ENCODE measurements at regions of chrX and their contacts with region 1.

Region 1: GRCh38 chrX:37755025-37755424 is 24.8 kb upstream of the CYBB start:
- DNase-seq: peak in 6 of 9 donors; percentile 15 to 53 (median 44)
- ATAC-seq: peak; percentile 91
- H3K4me3 ChIP-seq: peak overlapping the region; percentile 25
- H3K4me3 Mint-ChIP-seq: no peak overlapping the region
- H3K27ac ChIP-seq: peak overlapping the region; percentile 26
- H3K27ac Mint-ChIP-seq: no peak overlapping the region
- H3K4me1 ChIP-seq: peaks cover 37% of the 10 kb centered on the region in 2 donors
- H3K4me1 Mint-ChIP-seq: peaks cover 0 to 18% (median 6%) of the 10 kb centered on the region in 7 donors
- H3K27me3 ChIP-seq: no peaks in the 10 kb centered on the region
- H3K27me3 Mint-ChIP-seq: no peaks in the 10 kb centered on the region

Region 2: DNA sequence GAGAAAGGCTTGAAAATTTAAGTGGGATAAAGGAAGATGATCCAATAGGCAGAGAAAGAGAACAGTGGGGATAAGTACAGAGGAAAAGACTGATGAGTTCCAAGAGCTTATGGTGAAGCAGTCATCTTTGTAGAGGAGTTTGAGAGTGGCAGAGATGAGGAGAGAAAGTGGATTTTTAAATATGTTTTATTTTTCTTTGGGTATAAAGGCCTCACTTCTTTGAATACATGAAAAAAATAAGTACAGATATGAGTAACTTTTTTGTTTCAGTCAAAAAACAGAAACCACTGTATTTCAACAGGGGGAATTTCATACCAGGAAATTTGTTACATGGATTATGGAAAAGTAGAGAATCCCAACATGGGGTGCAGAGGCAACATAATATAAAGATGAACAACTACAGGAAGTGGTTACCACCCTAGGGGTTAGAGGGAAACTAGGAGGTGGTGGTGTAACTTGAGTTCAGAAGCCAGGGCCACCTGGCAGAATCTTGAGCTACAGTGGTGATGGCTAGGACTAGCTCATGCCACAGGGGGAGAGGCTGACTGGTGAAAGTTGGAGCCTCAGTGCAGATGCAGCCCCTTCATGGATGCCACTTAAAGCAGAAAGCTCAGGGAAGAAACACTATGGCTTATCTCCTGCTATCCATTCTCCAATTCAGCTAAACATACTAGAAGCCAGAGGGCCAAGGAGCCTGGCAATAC is 21.4 kb after region 1 on chrX:
- CTCF ChIA-PET with region 1: no interaction called
- POLR2A ChIA-PET with region 1: no interaction called
- intact Hi-C with region 1: loop called in 1 of 2 experiments (anchors 1 kb)
- DNase-seq: no peak
- ATAC-seq: peak; percentile 45
- H3K4me3 ChIP-seq: no peak overlapping the region
- H3K4me3 Mint-ChIP-seq: peak overlapping the region in 9 of 10 donors; percentile 26 to 67 (median 59)
- H3K27ac ChIP-seq: no peak overlapping the region
- H3K27ac Mint-ChIP-seq: peak overlapping the region; percentile 30 to 89 (median 70)
- H3K4me1 ChIP-seq: peaks cover 12 to 20% of the 10 kb centered on the region in 2 donors
- H3K4me1 Mint-ChIP-seq: peaks cover 7 to 26% (median 24%) of the 10 kb centered on the region in 7 donors
- H3K27me3 ChIP-seq: no peaks in the 10 kb centered on the region
- H3K27me3 Mint-ChIP-seq: no peaks in the 10 kb centered on the region

Region 3: DNA sequence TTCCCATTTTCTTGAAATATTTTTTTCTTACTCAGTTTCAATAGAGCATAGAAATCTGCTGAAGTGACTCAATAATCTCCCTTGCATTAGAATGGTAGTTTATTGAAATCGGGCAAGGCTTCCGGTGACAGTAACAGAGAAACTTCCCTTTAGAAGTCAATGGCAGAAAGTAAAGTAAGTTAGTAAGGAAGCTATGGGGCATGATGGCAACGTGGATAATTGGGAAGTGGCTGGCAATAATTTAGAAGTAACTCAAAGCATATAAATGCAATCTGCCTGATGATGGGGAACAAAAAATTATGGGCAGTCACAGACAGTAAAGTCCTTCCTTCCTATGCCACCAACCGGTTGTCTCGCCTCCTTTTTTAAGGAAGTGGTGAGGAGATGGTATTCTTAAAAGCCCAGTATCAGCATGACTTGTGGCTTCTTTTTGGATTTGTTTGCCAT is 32.4 kb after region 1 on chrX:
- CTCF ChIA-PET with region 1: no interaction called
- POLR2A ChIA-PET with region 1: no interaction called
- intact Hi-C with region 1: loop called (anchors 2 to 5 kb)
- DNase-seq: no peak
- ATAC-seq: peak; percentile 62
- H3K4me3 ChIP-seq: no peak overlapping the region
- H3K4me3 Mint-ChIP-seq: peak overlapping the region in 6 of 10 donors; percentile 1 to 61 (median 51)
- H3K27ac ChIP-seq: no peak overlapping the region
- H3K27ac Mint-ChIP-seq: peak overlapping the region in 7 of 9 donors; percentile 3 to 86 (median 48)
- H3K4me1 ChIP-seq: peaks cover 11 to 20% of the 10 kb centered on the region in 2 donors
- H3K4me1 Mint-ChIP-seq: peaks cover 18 to 52% (median 38%) of the 10 kb centered on the region in 7 donors
- H3K27me3 ChIP-seq: no peaks in the 10 kb centered on the region
- H3K27me3 Mint-ChIP-seq: no peaks in the 10 kb centered on the region

Region 4: DNA sequence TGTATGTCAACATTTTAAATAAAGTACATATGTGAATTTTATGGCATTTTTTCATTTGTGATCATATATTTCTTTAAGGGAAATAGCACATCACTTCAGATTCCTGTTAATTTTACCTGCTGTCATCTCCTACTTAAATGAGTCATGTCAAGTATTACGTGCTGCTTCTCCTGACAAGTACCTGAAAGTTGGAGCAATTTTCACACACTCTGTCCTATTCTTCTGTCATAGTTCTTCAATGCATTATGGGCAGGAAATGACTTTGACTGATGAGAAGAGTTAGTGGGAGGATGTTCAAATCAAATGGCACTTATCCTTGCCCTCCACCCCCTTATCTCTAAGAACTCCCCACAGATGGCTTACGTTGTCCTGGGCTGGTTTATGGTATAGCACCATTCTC is 187.1 kb after region 1 on chrX:
- CTCF ChIA-PET with region 1: no interaction called
- POLR2A ChIA-PET with region 1: no interaction called
- intact Hi-C with region 1: no loop called
- DNase-seq: no peak
- ATAC-seq: no peak
- H3K4me3 ChIP-seq: no peak overlapping the region
- H3K4me3 Mint-ChIP-seq: no peak overlapping the region
- H3K27ac ChIP-seq: no peak overlapping the region
- H3K27ac Mint-ChIP-seq: no peak overlapping the region
- H3K4me1 ChIP-seq: no peaks in the 10 kb centered on the region
- H3K4me1 Mint-ChIP-seq: no peaks in the 10 kb centered on the region
- H3K27me3 ChIP-seq: no peaks in the 10 kb centered on the region
- H3K27me3 Mint-ChIP-seq: peaks cover 0 to 5% (median under 1%) of the 10 kb centered on the region in 5 donors

Region 5: DNA sequence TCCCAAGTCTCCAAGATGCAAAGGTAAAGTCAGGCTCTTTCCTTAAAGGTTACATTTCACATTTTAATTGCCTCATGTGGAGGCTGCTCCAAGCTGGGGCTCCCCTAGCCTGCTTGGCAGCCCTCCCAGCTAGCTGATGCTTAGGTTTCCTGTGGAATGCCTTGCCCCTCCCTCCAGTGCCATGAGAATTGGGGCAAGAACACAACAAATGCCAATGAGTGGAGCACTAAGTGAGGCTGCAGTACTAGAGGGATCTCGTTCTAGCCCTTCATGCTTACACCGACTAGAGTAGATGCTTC is 1643.9 kb after region 1 on chrX:
- CTCF ChIA-PET with region 1: no interaction called
- POLR2A ChIA-PET with region 1: no interaction called
- intact Hi-C with region 1: no loop called
- DNase-seq: no peak
- ATAC-seq: no peak
- H3K4me3 ChIP-seq: no peak overlapping the region
- H3K4me3 Mint-ChIP-seq: no peak overlapping the region
- H3K27ac ChIP-seq: no peak overlapping the region
- H3K27ac Mint-ChIP-seq: no peak overlapping the region
- H3K4me1 ChIP-seq: no peaks in the 10 kb centered on the region
- H3K4me1 Mint-ChIP-seq: peaks cover 0 to 5% (median 0%) of the 10 kb centered on the region in 7 donors
- H3K27me3 ChIP-seq: no peaks in the 10 kb centered on the region
- H3K27me3 Mint-ChIP-seq: no peaks in the 10 kb centered on the region